ENCODE measurements at regions of chr6 and their contacts with region 1.

Region 1: DNA sequence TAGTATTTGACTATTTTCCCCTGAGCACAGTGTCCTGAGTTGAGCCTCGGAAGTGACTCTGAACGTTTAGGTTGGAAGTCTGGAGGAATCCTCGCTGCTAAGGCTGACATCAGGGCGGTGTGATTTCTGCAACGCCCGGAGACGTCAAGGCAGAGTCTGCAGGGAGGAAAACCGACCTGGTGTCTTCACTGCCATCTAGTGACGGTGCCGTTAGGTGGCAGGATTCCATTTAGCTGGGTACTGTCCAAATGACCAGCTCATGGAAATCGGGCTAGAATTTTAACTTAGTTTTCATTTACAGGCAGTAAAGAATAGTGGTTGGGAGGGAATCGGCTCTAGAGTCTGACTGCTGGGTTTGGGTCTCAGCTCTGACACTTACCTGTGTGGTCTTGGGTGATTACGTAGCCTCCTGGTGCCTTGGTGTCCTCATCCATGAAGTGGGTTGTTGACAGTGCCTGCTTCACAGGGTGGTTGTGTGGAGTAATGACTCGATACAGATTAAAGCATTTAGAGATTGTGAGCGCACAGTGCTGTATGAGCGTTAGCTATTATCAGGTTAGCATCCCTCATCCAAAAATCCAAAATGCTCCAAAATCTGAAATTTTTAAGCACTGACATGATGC is 35.0 kb downstream of the FOXF2 start:
- DNase-seq: peak; percentile 34
- H3K4me3 ChIP-seq: no peak overlapping the region
- H3K27ac ChIP-seq: no peak overlapping the region
- H3K4me1 ChIP-seq: no peaks in the 10 kb centered on the region
- H3K27me3 ChIP-seq: peaks cover 41% of the 10 kb centered on the region; the same call in 1 of the 2 replicates
- CTCF ChIP-seq: peak; percentile 55
- EP300 ChIP-seq: no peak
- RAD21 ChIP-seq: no peak

Region 2: GRCh38 chr6:1436334-1437306 is 12.2 kb after region 1 on chr6:
- CTCF ChIA-PET with region 1: interaction called, 15 read pairs
- POLR2A ChIA-PET with region 1: no interaction called
- DNase-seq: peak; percentile 71
- H3K4me3 ChIP-seq: peak overlapping the region in 1 of 2 experiments; percentile 17; a peak in 1 of 4 replicates
- H3K27ac ChIP-seq: no peak overlapping the region
- H3K4me1 ChIP-seq: no peaks in the 10 kb centered on the region
- H3K27me3 ChIP-seq: peaks cover 40% of the 10 kb centered on the region
- CTCF ChIP-seq: peak; percentile 75
- EP300 ChIP-seq: no peak
- RAD21 ChIP-seq: peak; percentile 81

Measured in SK-N-SH (cell line).